Motor neuron (in vitro differentiated cells): ENCODE measurements at regions of chr3 and their contacts with region 1.

Region 1: GRCh38 chr3:190183121-190183520 is 62.4 kb upstream of the P3H2 start:
- ATAC-seq: peak in 7 of 8 experiments; percentile 19 to 94 (median 52)
- H3K4me3 ChIP-seq: no peak overlapping the region
- H3K27ac ChIP-seq: no peak overlapping the region
- H3K4me1 ChIP-seq: no peaks in the 10 kb centered on the region

Region 2: DNA sequence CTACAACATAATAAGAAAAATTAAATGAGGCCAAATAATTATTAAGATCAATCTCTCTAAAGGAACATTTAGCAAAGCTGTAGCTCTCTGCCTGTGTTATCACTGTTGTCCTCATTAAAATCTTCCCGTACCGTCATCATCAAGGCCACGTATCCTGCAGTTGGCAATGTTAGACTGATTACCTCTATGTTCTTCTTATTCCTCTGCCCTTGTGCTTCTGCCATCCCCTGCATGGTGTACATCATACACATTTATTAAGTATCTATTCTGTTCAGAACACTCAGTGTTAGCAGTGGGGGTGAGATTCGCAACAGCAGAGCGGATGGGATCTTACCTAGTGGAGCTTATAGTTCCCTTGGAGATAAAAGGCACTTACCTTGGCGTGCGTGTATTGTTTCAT is 998.6 kb before region 1 on chr3:
- in situ Hi-C with region 1: no loop called
- ATAC-seq: no peak
- H3K4me3 ChIP-seq: no peak overlapping the region
- H3K27ac ChIP-seq: no peak overlapping the region
- H3K4me1 ChIP-seq: no peaks in the 10 kb centered on the region

Region 3: DNA sequence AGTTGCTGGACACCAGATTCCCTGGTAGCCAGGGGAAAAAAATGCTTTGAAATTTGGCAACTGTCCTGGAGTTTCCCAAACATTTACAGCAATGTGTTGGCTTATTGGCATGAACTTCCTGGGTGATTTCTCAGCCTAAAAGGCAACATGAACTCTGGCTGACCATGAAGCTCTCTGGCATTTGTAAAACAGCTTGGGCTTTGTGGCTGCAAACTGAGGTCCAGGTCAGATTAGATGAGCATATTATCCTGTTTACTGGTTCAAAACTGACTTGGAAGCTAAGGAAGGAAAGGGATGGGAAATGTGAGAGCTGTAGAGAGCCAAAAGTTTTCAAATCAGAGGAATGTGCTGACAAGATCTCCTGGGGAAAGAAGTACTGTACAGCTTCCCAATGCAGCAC is 201.5 kb before region 1 on chr3:
- in situ Hi-C with region 1: loop called in 1 of 9 experiments (anchors 25 kb)
- ATAC-seq: peak in 3 of 8 experiments; percentile 17 to 62 (median 30)
- H3K4me3 ChIP-seq: no peak overlapping the region
- H3K27ac ChIP-seq: no peak overlapping the region
- H3K4me1 ChIP-seq: no peaks in the 10 kb centered on the region